Mammary epithelial cell (primary cell): ENCODE measurements at regions of chr12 and their contacts with region 1.

Region 1: GRCh38 chr12:60494244-60494643 is 898.4 kb downstream of the SLC16A7 start:
- DNase-seq: peak; percentile 37
- H3K4me3 ChIP-seq: no peak overlapping the region
- H3K27ac ChIP-seq: no peak overlapping the region
- H3K4me1 ChIP-seq: no peaks in the 10 kb centered on the region
- H3K27me3 ChIP-seq: no peaks in the 10 kb centered on the region
- CTCF ChIP-seq: peak; percentile 70

Region 2: DNA sequence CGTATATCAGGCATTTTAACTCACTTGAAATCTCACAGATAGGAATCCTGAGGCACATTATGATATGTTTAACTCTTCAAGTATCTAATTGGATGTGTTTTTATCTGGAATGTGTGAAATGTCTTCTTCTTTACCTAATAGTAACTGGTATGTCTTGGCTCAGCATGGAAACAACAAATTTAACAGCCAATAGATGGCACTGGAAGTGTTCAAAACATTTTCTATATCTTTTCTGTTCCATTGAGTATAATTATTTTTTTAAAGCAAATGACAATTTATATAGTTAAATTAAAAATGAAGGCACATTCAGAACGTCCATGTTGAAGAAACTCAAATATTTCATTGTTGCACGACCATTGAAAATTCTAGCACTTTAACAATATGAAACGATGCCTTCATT is 1063.0 kb before region 1 on chr12:
- CTCF ChIA-PET with region 1: no interaction called
- dilution Hi-C with region 1: no loop called
- in situ Hi-C with region 1: loop called in 1 of 2 experiments (anchors 25 kb)
- intact Hi-C with region 1: no loop called
- DNase-seq: no peak
- H3K4me3 ChIP-seq: no peak overlapping the region
- H3K27ac ChIP-seq: no peak overlapping the region
- H3K4me1 ChIP-seq: no peaks in the 10 kb centered on the region
- H3K27me3 ChIP-seq: no peaks in the 10 kb centered on the region
- CTCF ChIP-seq: peak in 1 of 2 donors; percentile 35

Region 3: DNA sequence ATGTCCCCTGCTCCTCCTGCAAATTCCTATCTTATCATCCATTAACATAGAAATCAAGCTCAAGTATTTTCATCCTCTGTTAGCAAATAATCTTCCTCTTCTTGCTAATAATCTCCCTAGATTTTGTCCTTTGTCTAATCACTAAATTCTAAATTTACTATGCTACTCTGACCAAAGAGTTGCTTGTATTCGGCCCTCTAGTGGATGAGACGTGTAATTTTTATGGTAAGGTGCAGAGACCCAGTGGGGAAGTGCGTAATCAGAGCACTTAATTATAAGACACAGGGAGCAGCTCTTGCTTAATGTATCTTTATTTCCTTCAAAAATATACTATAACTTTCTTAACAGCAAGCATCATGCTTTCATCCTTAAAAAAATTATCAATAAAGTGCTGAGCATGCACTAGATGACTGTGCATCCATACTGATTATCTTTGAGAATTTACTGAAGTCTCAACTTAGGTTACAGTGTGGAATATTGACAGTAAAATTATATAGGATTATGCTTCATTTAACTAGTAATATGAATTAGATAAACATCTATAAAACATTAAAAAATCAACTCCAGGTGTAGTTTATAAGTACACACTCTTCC is 685.8 kb before region 1 on chr12:
- CTCF ChIA-PET with region 1: no interaction called
- dilution Hi-C with region 1: no loop called
- in situ Hi-C with region 1: no loop called
- intact Hi-C with region 1: loop called (anchors 10 kb)
- DNase-seq: peak; percentile 22
- H3K4me3 ChIP-seq: no peak overlapping the region
- H3K27ac ChIP-seq: no peak overlapping the region
- H3K4me1 ChIP-seq: peaks cover 5% of the 10 kb centered on the region
- H3K27me3 ChIP-seq: no peaks in the 10 kb centered on the region
- CTCF ChIP-seq: peak; percentile 76 to 80

Region 4: DNA sequence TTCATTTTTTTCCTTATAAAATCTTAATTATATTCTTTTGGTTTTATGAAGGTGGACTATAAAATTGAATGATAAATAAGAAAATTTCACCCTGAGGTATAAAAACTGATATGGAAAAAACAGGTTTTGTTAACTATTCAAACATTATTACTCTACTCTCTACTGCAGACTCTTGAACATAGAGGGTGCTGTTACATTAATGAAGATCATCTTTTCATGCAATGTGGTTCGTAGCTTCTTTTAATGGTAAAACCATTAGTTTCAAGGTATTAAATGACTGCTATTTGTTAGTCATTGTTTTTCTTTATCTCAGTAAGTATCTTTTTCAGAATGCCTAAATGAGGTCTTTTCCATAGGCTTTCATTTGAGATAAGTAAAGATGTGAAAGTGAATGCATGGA is 388.0 kb before region 1 on chr12:
- CTCF ChIA-PET with region 1: interaction called, 7 read pairs
- dilution Hi-C with region 1: no loop called
- in situ Hi-C with region 1: loop called in 1 of 2 experiments (anchors 25 kb)
- intact Hi-C with region 1: loop called (anchors 1 kb)
- DNase-seq: no peak
- H3K4me3 ChIP-seq: no peak overlapping the region
- H3K27ac ChIP-seq: no peak overlapping the region
- H3K4me1 ChIP-seq: peaks cover 6% of the 10 kb centered on the region
- H3K27me3 ChIP-seq: no peaks in the 10 kb centered on the region
- CTCF ChIP-seq: peak; percentile 35 to 47

Region 5: DNA sequence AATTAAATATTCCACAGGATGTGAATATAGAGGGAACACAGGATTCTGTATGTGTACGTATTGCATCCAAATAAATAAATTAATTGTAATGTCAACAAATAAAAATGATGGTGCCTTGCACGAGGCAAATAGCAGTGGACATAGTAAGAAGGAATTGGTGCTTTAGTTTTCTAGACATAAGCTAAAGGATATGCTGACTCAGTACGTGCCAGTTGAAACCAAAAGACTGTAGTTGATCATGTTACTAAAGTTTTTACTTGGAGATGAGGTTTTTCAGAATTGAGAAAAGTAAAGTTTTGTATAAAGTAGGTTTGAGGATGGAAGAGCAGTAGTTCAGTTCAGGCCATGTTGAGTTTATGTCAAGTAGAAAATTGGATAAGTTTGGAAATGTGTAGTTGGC is 91.2 kb before region 1 on chr12:
- CTCF ChIA-PET with region 1: no interaction called
- dilution Hi-C with region 1: no loop called
- in situ Hi-C with region 1: no loop called
- intact Hi-C with region 1: no loop called
- DNase-seq: no peak
- H3K4me3 ChIP-seq: no peak overlapping the region
- H3K27ac ChIP-seq: no peak overlapping the region
- H3K4me1 ChIP-seq: no peaks in the 10 kb centered on the region
- H3K27me3 ChIP-seq: no peaks in the 10 kb centered on the region
- CTCF ChIP-seq: no peak

Region 6: GRCh38 chr12:60594035-60594711 is 99.9 kb after region 1 on chr12:
- CTCF ChIA-PET with region 1: no interaction called
- dilution Hi-C with region 1: no loop called
- in situ Hi-C with region 1: no loop called
- intact Hi-C with region 1: no loop called
- DNase-seq: no peak
- H3K4me3 ChIP-seq: no peak overlapping the region
- H3K27ac ChIP-seq: no peak overlapping the region
- H3K4me1 ChIP-seq: no peaks in the 10 kb centered on the region
- H3K27me3 ChIP-seq: no peaks in the 10 kb centered on the region
- CTCF ChIP-seq: no peak

Region 7: DNA sequence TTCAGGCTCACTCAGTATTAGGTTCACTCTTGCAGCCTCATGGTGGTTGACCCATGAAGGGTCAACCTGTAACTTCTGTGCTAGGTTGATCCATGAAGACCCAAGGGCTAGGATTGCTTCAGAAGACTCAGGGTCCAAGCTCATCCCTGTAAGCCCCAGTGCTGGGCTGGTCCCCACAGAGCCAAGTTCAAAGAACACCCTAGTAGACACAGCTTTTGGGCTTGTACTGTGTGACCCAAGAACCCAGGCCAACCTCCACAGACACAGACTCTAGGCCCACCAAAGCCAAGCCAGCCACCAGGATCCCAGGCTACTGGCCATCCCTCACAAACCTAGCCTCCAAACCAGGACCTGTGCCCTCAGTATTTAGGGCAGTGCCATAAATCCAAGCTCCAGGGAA is 122.2 kb after region 1 on chr12:
- CTCF ChIA-PET with region 1: no interaction called
- dilution Hi-C with region 1: no loop called
- in situ Hi-C with region 1: no loop called
- intact Hi-C with region 1: no loop called
- DNase-seq: no peak
- H3K4me3 ChIP-seq: no peak overlapping the region
- H3K27ac ChIP-seq: no peak overlapping the region
- H3K4me1 ChIP-seq: no peaks in the 10 kb centered on the region
- H3K27me3 ChIP-seq: no peaks in the 10 kb centered on the region
- CTCF ChIP-seq: no peak

Region 8: GRCh38 chr12:61993734-61994345 is 1499.6 kb after region 1 on chr12:
- CTCF ChIA-PET with region 1: no interaction called
- dilution Hi-C with region 1: no loop called
- in situ Hi-C with region 1: no loop called
- intact Hi-C with region 1: loop called (anchors 2 kb)
- DNase-seq: peak; percentile 32
- H3K4me3 ChIP-seq: no peak overlapping the region
- H3K27ac ChIP-seq: no peak overlapping the region
- H3K4me1 ChIP-seq: no peaks in the 10 kb centered on the region
- H3K27me3 ChIP-seq: no peaks in the 10 kb centered on the region
- CTCF ChIP-seq: peak; percentile 73 to 88